ENCODE measurements at regions of chr7 and their contacts with region 1.

Region 1: DNA sequence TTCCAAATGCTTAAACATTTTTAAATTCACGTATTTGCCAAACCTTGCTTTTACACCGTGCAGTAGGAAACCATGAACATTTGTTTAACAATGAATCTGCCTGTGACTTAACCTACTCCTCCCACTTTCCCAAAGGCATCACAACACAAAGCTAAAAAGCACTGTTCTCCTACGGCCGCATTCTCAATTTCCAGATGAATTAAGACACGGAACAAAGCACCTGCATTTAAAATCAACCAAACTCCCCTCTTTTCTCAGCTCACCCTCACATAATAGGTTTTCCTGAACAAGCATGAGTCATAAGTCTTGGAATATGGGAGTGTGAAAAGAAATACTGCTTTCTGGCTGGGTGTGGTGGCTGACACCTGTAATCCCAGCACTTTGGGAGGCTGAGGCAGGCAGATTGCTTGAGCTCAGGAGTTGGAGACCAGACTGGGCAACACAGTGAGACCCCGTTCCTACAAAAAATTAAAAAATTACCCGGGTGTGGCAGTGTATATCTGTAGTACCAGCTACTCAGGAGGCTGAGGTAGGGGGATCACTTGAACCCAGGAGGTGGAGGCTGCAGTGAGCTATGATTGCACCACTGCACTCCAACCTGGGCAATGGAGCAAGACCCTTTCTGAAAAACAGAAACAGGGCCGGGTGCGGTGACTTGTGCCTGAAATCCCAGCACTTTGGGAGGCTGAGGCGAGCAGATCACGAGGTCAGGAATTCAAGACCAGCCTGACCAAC is 51.7 kb upstream of the CYTH3 start:
- DNase-seq: no peak
- H3K4me3 ChIP-seq: no peak overlapping the region
- H3K27ac ChIP-seq: no peak overlapping the region
- H3K4me1 ChIP-seq: no peaks in the 10 kb centered on the region
- H3K27me3 ChIP-seq: no peaks in the 10 kb centered on the region

Region 2: DNA sequence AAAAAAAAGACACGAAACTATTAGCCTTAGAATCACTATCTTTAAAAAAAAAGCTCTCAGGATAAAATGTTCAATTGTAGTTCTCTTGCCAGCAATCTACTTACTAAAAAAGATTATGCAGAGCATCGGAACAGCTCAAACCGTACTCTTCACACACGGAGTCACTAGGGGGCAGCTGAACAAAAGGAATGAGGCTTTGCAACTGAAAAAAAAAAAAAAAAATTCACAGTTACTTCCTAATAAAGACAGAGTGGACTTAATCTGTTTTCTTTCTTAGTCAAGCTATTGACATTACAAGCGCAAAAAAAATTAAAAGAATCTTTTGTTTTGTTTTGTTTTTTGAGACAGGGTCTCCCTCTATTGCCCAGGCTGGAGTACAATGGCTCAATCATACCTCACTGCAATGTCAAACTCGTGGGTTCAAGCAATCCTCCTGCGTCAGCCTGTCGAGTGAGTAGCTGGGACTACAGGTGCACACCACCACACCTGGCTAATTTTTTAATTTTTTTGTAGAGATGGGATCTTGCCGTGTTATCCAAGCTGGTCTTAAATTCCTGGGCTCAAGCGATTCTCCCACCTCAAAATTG is 326.8 kb before region 1 on chr7:
- CTCF ChIA-PET with region 1: interaction called, 16 read pairs
- POLR2A ChIA-PET with region 1: no interaction called
- DNase-seq: peak; percentile 73 to 88 (median 84)
- H3K4me3 ChIP-seq: no peak overlapping the region
- H3K27ac ChIP-seq: no peak overlapping the region
- H3K4me1 ChIP-seq: no peaks in the 10 kb centered on the region
- H3K27me3 ChIP-seq: no peaks in the 10 kb centered on the region

Region 3: GRCh38 chr7:6139189-6139996 is 184.7 kb before region 1 on chr7:
- CTCF ChIA-PET with region 1: interaction called, 12 read pairs
- POLR2A ChIA-PET with region 1: no interaction called
- DNase-seq: peak; percentile 40 to 86 (median 80)
- H3K4me3 ChIP-seq: peak overlapping the region in 2 of 7 experiments; percentile 23 to 50
- H3K27ac ChIP-seq: peak overlapping the region in 1 of 2 experiments; percentile 25
- H3K4me1 ChIP-seq: peaks cover 10 to 29% (median 19%) of the 10 kb centered on the region in 4 experiments
- H3K27me3 ChIP-seq: no peaks in the 10 kb centered on the region

Region 4: DNA sequence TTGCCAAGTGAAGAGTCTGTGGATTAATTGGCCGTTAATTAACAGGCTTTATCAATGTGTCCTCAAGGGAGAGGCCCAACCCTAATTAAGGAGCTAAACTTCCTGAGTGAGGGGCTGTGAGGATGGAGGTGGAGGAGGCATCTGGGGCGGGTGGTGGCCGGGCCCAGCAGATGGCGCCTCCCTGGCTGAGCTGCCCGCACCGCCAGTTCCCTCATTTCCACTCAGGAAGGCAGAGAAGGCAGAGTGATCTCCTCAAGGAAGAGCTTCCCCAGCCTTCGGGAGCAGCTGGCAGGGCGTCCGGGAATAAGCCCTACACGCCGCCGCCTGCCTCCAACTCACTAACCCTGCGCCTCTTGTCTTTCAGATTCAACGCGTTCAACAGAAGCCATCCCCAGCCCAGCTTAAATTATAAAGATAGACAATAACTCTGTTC is 163.9 kb before region 1 on chr7:
- CTCF ChIA-PET with region 1: interaction called, 58 read pairs
- POLR2A ChIA-PET with region 1: no interaction called
- DNase-seq: peak in 2 of 3 donors; percentile 28 to 35
- H3K4me3 ChIP-seq: no peak overlapping the region
- H3K27ac ChIP-seq: no peak overlapping the region
- H3K4me1 ChIP-seq: no peaks in the 10 kb centered on the region
- H3K27me3 ChIP-seq: no peaks in the 10 kb centered on the region

Region 5: DNA sequence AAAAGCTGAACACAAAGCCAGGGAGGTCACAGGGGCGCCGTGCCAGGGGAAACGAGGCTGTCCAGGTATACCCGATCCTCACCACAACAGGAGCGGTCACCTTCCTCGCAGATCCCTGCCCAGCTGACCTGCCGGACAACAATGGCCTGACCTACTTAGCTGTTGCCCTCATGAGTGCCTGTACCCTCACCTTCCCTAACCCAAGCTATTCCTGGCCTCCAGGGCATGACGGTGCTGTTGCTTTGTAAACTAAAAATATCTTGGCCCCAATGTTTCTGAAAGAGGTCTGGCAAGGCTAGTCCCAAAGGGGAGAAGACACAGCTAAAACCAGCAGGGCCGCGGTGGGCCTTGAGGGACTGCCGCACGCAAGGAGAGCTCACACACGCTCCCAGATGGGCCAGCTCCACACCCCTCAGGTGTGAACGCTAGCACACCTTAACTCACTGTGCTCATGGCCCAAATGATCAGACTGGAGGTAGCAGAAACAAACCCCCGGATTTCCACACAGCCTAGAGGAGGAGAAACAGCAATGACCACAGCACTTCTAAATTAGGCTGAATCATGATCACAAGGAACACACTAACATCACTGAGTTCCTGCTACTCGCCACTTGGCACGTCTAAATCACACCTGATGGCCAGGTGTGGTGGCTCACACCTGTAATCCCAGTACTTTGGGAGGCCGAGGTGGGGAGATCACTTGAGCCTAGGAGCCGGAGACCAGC is 14.6 kb after region 1 on chr7:
- CTCF ChIA-PET with region 1: interaction called, 14 read pairs
- POLR2A ChIA-PET with region 1: no interaction called
- DNase-seq: peak in 1 of 3 donors; percentile 9
- H3K4me3 ChIP-seq: no peak overlapping the region
- H3K27ac ChIP-seq: no peak overlapping the region
- H3K4me1 ChIP-seq: peaks cover 0 to 4% (median 1%) of the 10 kb centered on the region in 4 experiments
- H3K27me3 ChIP-seq: no peaks in the 10 kb centered on the region

Measured in common myeloid progenitor, CD34-positive (primary cell).